HCT116 (cell line): ENCODE measurements at regions of chr3 and their contacts with region 1.

Region 1: GRCh38 chr3:123344175-123344906 is 104.5 kb downstream of the ADCY5 start:
- DNase-seq: no peak
- ATAC-seq: no peak
- H3K4me3 ChIP-seq: no peak overlapping the region
- H3K27ac ChIP-seq: no peak overlapping the region
- H3K4me1 ChIP-seq: peaks cover 4 to 10% of the 10 kb centered on the region in 2 experiments; a peak in 2 of 4 replicates
- H3K27me3 ChIP-seq: peaks cover 3% of the 10 kb centered on the region; the same call in 1 of the 2 replicates
- CTCF ChIP-seq: no peak
- POLR2A ChIP-seq: no peak
- RAD21 ChIP-seq: no peak

Region 2: GRCh38 chr3:123489400-123490004 is 145.2 kb after region 1 on chr3:
- CTCF ChIA-PET with region 1: no interaction called
- POLR2A ChIA-PET with region 1: no interaction called
- RAD21 ChIA-PET with region 1: no interaction called
- intact Hi-C with region 1: loop called (anchors 5 kb)
- DNase-seq: peak; percentile 29
- ATAC-seq: peak; percentile 87
- H3K4me3 ChIP-seq: no peak overlapping the region
- H3K27ac ChIP-seq: no peak overlapping the region
- H3K4me1 ChIP-seq: no peaks in the 10 kb centered on the region
- H3K27me3 ChIP-seq: no peaks in the 10 kb centered on the region
- CTCF ChIP-seq: peak; percentile 87 to 95 (median 93)
- POLR2A ChIP-seq: no peak
- RAD21 ChIP-seq: peak; percentile 89